ENCODE measurements at regions of chr19 and their contacts with region 1.

Region 1: GRCh38 chr19:4815426-4816201 is 15.9 kb downstream of the TICAM1 start:
- DNase-seq: peak; percentile 85
- ATAC-seq: peak; percentile 82
- H3K4me3 Mint-ChIP-seq: peak overlapping the region; percentile 57
- H3K27ac Mint-ChIP-seq: peak overlapping the region; percentile 41
- H3K4me1 Mint-ChIP-seq: peaks cover 28% of the 10 kb centered on the region
- H3K27me3 Mint-ChIP-seq: no peaks in the 10 kb centered on the region

Region 2: GRCh38 chr19:4589579-4590410 is 225.8 kb before region 1 on chr19:
- CTCF ChIA-PET with region 1: no interaction called
- DNase-seq: peak; percentile 44
- ATAC-seq: peak; percentile 49
- H3K4me3 Mint-ChIP-seq: no peak overlapping the region
- H3K27ac Mint-ChIP-seq: no peak overlapping the region
- H3K4me1 Mint-ChIP-seq: no peaks in the 10 kb centered on the region
- H3K27me3 Mint-ChIP-seq: peaks cover 40% of the 10 kb centered on the region

Region 3: GRCh38 chr19:4732680-4733114 is 82.9 kb before region 1 on chr19:
- CTCF ChIA-PET with region 1: interaction called, 13 read pairs
- DNase-seq: peak; percentile 74
- ATAC-seq: peak; percentile 88
- H3K4me3 Mint-ChIP-seq: peak overlapping the region; percentile 31
- H3K27ac Mint-ChIP-seq: no peak overlapping the region
- H3K4me1 Mint-ChIP-seq: peaks cover 11% of the 10 kb centered on the region
- H3K27me3 Mint-ChIP-seq: no peaks in the 10 kb centered on the region

Region 4: DNA sequence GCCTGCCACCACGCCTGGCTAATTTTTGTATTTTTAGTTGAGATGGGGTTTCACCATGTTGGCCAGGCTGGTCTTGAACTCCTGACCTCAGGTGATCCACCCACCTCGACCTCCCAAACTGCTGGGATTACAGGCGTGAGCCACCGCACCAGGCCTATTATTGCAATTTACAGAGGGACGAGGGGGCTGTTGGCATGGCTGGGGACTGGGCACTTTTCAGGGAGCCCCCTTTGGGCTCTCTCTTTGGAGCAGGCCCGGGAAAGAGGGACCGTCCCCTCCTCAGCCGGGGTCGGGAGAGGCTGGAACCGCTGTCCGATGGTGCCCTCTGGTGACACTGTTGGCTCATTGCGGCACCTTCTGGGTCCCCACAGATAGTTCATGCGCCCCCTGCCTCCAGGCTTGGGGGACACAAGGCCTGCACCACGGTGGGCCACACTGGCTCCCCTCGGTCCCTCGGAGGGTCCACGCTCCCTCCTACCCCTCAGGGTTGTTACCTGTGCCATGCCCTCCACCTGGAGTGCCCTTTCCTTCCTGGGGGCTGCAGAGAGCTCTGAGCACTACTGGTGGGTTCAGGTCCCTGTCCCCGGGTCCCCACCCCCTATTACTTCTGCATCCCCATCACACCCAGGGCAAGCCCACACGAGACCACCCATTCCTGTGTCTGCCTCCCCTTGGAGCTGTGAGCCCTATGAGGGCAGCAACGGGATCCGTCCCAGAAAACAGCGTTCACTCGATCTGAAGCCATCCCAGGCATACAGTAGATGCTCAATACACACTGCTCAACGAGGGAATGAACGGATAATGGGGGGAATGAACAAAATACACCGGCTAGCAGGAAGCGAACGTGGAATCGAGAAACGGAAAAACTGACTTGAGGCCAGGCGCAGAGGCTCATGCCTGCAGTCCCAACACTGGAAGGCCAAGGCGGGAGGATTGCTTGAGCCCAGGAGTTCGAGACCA is 11.6 kb before region 1 on chr19:
- CTCF ChIA-PET with region 1: interaction called, 46 read pairs
- DNase-seq: peak; percentile 75
- ATAC-seq: peak; percentile 92
- H3K4me3 Mint-ChIP-seq: no peak overlapping the region
- H3K27ac Mint-ChIP-seq: no peak overlapping the region
- H3K4me1 Mint-ChIP-seq: no peaks in the 10 kb centered on the region
- H3K27me3 Mint-ChIP-seq: no peaks in the 10 kb centered on the region

Region 5: DNA sequence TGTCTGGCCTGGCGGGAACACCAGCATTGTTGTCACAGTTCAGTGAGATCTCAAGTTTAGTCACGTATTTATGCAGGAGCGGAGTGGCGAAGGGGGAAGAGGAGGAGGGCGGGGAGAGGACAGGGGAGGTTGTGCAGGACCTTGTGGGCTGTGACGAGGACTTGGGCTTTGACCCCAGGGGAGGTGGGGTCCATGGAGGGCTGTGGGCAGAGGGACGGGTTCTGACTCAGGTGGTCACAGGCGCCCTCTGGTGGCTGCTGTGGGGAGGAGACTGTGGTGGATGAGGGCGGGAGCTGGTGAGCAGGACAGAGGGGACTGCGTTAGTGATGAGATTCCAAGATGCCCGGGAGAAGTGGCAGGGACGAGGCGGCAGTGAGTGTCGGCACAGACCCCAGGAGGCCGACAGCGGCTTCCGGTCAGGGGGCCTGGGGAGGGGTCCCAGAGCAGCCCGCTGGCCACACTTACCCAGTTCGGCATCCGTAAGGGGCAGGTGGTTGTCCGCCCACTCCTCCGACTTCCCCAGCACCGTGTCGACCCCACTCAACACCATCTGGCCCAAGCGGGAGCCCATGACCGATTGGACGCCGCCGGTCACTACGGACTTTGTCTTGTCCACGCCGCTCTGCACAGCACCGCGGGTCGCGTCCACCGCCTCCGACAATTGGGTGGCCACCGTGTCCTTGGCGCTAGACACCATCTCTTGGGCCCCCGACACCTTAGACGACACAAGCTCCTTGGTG is 36.1 kb after region 1 on chr19:
- CTCF ChIA-PET with region 1: interaction called, 418 read pairs
- DNase-seq: peak; percentile 82
- ATAC-seq: peak; percentile 87
- H3K4me3 Mint-ChIP-seq: no peak overlapping the region
- H3K27ac Mint-ChIP-seq: no peak overlapping the region
- H3K4me1 Mint-ChIP-seq: peaks cover 3% of the 10 kb centered on the region
- H3K27me3 Mint-ChIP-seq: no peaks in the 10 kb centered on the region

Region 6: GRCh38 chr19:4873930-4874329 is 58.3 kb after region 1 on chr19:
- CTCF ChIA-PET with region 1: interaction called, 43 read pairs
- DNase-seq: no peak
- ATAC-seq: no peak
- H3K4me3 Mint-ChIP-seq: no peak overlapping the region
- H3K27ac Mint-ChIP-seq: no peak overlapping the region
- H3K4me1 Mint-ChIP-seq: peaks cover 22% of the 10 kb centered on the region
- H3K27me3 Mint-ChIP-seq: peaks cover 3% of the 10 kb centered on the region

Region 7: DNA sequence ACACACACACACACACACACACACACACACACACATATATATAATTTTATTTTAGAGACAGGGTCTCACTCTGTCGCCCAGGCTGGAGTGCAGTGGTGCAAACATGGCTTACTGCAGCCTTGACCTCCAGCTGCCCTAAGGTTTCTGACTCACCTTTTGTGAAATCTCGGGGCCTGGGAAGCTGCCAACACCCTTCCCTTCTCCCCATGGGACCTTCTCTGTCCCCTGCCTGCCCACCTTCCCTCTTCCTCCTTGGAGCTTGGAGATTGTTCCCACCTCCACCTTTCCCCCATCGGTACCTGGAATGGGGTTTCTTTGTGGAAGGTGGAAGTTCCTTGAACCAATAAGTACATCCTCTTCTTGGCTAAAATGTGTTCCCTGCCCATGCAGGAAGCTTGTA is 80.8 kb after region 1 on chr19:
- CTCF ChIA-PET with region 1: no interaction called
- DNase-seq: no peak
- ATAC-seq: no peak
- H3K4me3 Mint-ChIP-seq: no peak overlapping the region
- H3K27ac Mint-ChIP-seq: no peak overlapping the region
- H3K4me1 Mint-ChIP-seq: no peaks in the 10 kb centered on the region
- H3K27me3 Mint-ChIP-seq: no peaks in the 10 kb centered on the region

Region 8: GRCh38 chr19:5031231-5032100 is 215.9 kb after region 1 on chr19:
- CTCF ChIA-PET with region 1: interaction called, 43 read pairs
- DNase-seq: peak; percentile 87
- ATAC-seq: peak; percentile 89
- H3K4me3 Mint-ChIP-seq: no peak overlapping the region
- H3K27ac Mint-ChIP-seq: no peak overlapping the region
- H3K4me1 Mint-ChIP-seq: no peaks in the 10 kb centered on the region
- H3K27me3 Mint-ChIP-seq: no peaks in the 10 kb centered on the region